ENCODE measurements at regions of chr2 and their contacts with region 1.

Region 1: DNA sequence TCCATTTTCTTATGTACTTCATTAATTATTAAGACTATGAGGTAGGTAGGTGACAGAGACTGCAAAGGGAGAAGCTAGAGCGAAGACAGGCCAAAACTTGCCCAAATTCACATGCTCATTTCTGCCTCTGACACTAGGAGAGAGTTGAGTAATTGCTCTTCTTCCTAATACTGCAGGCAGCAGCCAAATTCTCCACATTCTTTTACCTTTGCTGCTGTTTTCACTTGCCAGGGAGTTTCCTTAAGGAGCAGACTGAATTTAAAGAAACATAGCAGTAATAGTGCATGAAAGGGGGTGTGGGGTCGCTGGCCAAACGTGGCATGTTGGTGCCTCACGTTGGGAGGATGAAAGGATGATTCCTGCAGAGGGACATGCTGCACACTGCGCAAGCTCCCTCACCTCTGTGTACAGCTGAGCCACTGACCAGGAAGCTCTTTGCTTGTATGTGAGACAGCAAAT is 12.3 kb downstream of the CRIM1 start:
- DNase-seq: no peak
- H3K4me3 ChIP-seq: peak overlapping the region in 1 of 2 donors; percentile 14
- H3K27ac ChIP-seq: peak overlapping the region; percentile 65 to 92
- H3K4me1 ChIP-seq: peaks cover 0 to 99% (median 87%) of the 10 kb centered on the region in 4 donors
- H3K27me3 ChIP-seq: no peaks in the 10 kb centered on the region
- CTCF ChIP-seq: no peak

Region 2: GRCh38 chr2:36397728-36398413 is 29.9 kb after region 1 on chr2:
- intact Hi-C with region 1: no loop called
- DNase-seq: no peak
- H3K4me3 ChIP-seq: no peak overlapping the region
- H3K27ac ChIP-seq: peak overlapping the region in 1 of 2 donors; percentile 10
- H3K4me1 ChIP-seq: peaks cover 0 to 99% (median 39%) of the 10 kb centered on the region in 4 donors
- H3K27me3 ChIP-seq: no peaks in the 10 kb centered on the region
- CTCF ChIP-seq: no peak

Region 3: GRCh38 chr2:36413218-36413617 is 45.3 kb after region 1 on chr2:
- intact Hi-C with region 1: loop called (anchors 10 kb)
- DNase-seq: no peak
- H3K4me3 ChIP-seq: no peak overlapping the region
- H3K27ac ChIP-seq: peak overlapping the region; percentile 64 to 74
- H3K4me1 ChIP-seq: peaks cover 0 to 100% (median 88%) of the 10 kb centered on the region in 4 donors
- H3K27me3 ChIP-seq: no peaks in the 10 kb centered on the region
- CTCF ChIP-seq: no peak